MCF 10A (cell line): ENCODE measurements at regions of chr21 and their contacts with region 1.

Region 1: GRCh38 chr21:17688912-17689874 is 76.5 kb upstream of the BTG3 start:
- DNase-seq: peak; percentile 95
- H3K4me3 Mint-ChIP-seq: peak overlapping the region; percentile 64
- H3K27ac Mint-ChIP-seq: peak overlapping the region; percentile 97
- H3K4me1 Mint-ChIP-seq: peaks cover 30% of the 10 kb centered on the region
- H3K27me3 Mint-ChIP-seq: no peaks in the 10 kb centered on the region
- CTCF ChIP-seq: peak; percentile 33

Region 2: DNA sequence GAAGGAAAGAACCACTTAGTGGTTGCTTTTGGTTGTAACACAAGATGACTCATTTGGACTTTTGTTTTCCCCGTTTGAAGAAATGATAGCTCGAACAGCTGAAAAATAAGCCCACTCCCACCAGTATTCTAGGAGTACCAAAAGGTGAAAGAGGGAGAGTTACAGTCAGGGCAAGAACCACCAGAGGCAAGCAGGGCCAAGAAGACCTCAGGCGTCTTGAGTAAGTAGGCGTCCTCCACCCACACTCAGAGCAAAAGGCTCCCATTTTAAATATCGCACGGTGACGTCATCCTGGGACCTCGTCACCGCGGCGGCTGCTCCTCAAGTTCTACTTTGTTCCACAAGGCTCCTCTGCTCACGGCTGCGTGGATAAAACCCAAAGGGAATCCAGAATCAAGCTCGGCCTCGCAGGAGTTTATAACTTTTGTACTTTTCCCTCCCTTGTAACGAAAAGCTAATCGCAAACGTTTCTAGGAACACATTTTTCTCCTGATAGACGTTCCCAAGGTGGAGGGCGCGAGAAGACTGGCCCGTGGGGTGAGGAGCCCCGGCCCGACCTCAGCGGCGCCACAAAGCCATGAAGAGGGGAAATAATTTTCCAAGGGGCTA is 77.7 kb before region 1 on chr21:
- CTCF ChIA-PET with region 1: interaction called, 4 read pairs
- POLR2A ChIA-PET with region 1: interaction called, 10 read pairs
- intact Hi-C with region 1: no loop called
- DNase-seq: peak; percentile 87
- H3K4me3 Mint-ChIP-seq: peak overlapping the region; percentile 89
- H3K27ac Mint-ChIP-seq: peak overlapping the region; percentile 93
- H3K4me1 Mint-ChIP-seq: peaks cover 10% of the 10 kb centered on the region
- H3K27me3 Mint-ChIP-seq: no peaks in the 10 kb centered on the region
- CTCF ChIP-seq: no peak

Region 3: DNA sequence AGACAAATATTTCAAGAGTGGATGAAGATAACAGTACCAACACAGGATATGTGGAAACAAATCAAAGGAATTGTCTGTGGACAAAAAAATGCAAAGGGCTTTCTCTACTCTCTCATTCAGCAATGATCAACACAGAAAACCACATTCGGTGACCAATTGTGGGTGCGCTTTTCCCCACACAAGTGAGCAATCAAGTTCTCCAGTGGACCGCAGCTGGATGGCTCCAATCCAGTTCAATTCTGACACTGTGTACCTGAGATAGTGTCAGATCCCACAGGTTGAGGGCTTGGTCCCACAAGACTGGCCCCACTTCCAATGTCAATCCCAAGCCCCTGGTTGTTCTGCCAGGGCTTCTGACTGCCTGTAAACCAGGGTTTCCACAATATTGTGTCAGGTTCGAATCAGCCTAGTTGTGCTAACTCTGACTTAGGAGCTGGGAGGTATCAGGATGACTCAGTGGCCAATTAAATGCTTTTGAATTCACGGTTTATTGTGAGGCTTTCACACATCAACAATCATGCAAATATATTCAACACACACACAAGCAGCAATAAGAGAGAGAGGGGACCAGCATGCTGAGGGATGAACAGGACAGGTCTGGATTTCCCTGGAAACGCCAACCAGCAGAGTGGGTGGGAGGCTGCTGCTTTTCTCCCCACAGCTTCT is 10.5 kb after region 1 on chr21:
- CTCF ChIA-PET with region 1: interaction called, 5 read pairs
- POLR2A ChIA-PET with region 1: interaction called, 10 read pairs
- intact Hi-C with region 1: no loop called
- DNase-seq: no peak
- H3K4me3 Mint-ChIP-seq: no peak overlapping the region
- H3K27ac Mint-ChIP-seq: no peak overlapping the region
- H3K4me1 Mint-ChIP-seq: no peaks in the 10 kb centered on the region
- H3K27me3 Mint-ChIP-seq: no peaks in the 10 kb centered on the region
- CTCF ChIP-seq: no peak

Region 4: DNA sequence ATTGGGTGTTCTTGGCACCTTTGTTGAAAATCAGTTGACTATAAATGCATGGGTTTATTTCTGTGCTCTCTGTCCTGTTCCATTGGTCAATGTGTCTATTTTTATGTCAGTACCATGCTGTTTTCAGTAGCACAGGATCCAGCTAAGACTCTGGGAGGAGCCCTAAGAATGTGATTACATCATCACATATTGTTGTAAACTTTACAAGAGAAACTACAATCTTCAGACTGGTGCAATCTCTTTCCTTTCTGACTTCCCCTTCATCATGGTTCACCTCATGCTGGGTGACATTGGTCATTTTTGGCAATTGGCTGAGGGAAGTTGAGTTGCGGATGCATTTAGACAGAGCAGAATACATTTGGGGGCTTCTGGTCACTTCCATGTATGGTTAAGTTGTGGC is 41.6 kb after region 1 on chr21:
- CTCF ChIA-PET with region 1: interaction called, 3 read pairs
- POLR2A ChIA-PET with region 1: interaction called, 26 read pairs
- intact Hi-C with region 1: no loop called
- DNase-seq: peak; percentile 22
- H3K4me3 Mint-ChIP-seq: no peak overlapping the region
- H3K27ac Mint-ChIP-seq: no peak overlapping the region
- H3K4me1 Mint-ChIP-seq: peaks cover 15% of the 10 kb centered on the region
- H3K27me3 Mint-ChIP-seq: no peaks in the 10 kb centered on the region
- CTCF ChIP-seq: no peak

Region 5: DNA sequence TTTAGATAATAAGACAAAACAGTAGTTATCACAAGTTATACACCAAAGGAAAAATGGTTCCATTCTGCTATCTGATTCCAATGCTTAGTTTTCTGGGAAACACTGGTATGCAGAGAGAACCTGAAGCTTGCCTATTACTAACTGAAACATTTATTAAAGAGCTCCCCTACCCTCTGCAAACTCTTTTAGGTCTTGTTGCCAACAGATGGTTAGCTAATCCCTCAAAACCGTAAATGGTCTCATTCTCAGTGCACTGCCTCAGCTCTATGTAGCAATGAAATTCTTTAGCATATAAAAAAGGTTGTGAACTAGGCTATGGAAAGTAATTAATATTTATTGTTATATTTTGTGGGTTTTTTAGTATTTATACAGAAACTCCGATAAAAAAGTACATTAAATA is 109.6 kb after region 1 on chr21:
- CTCF ChIA-PET with region 1: interaction called, 5 read pairs
- POLR2A ChIA-PET with region 1: interaction called, 10 read pairs
- intact Hi-C with region 1: no loop called
- DNase-seq: no peak
- H3K4me3 Mint-ChIP-seq: no peak overlapping the region
- H3K27ac Mint-ChIP-seq: no peak overlapping the region
- H3K4me1 Mint-ChIP-seq: peaks cover 15% of the 10 kb centered on the region
- H3K27me3 Mint-ChIP-seq: no peaks in the 10 kb centered on the region
- CTCF ChIP-seq: no peak

Region 6: GRCh38 chr21:17903029-17903806 is 214.0 kb after region 1 on chr21:
- CTCF ChIA-PET with region 1: interaction called, 12 read pairs
- POLR2A ChIA-PET with region 1: no interaction called
- intact Hi-C with region 1: no loop called
- DNase-seq: peak; percentile 45
- H3K4me3 Mint-ChIP-seq: no peak overlapping the region
- H3K27ac Mint-ChIP-seq: no peak overlapping the region
- H3K4me1 Mint-ChIP-seq: peaks cover 12% of the 10 kb centered on the region
- H3K27me3 Mint-ChIP-seq: no peaks in the 10 kb centered on the region
- CTCF ChIP-seq: peak; percentile 9

Region 7: DNA sequence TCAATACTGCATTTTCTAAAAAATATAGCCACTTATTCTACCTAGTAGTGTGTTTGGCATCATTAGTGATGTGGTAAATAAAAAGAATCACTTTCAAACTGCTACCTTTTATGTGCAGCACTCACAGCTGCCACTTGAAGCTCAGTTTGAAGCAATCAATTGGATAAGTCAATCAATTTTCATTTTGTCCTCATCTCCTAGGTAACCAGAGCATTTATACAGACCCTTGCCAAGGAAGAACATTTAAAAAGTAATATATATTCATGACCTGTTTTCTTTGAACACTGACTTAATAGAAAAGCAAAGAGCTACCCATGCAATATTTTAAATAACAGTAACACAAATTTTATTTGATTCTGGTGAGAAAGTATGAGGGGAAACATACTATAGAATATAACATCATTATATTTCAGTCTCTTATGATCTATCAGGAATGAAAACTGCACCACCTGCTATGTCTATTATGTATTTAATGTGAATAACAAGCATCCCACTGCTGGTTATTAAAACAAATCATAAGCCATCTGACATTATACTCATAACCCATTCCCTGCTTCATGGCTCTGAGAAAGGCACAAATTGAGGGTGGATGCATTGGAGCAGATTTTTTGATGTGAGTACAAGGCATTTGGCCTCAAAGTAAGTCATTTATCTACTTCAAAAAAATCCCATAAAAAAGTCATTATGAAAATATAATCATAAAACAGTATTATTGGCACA is 298.3 kb after region 1 on chr21:
- CTCF ChIA-PET with region 1: no interaction called
- POLR2A ChIA-PET with region 1: no interaction called
- intact Hi-C with region 1: no loop called
- DNase-seq: no peak
- H3K4me3 Mint-ChIP-seq: no peak overlapping the region
- H3K27ac Mint-ChIP-seq: no peak overlapping the region
- H3K4me1 Mint-ChIP-seq: no peaks in the 10 kb centered on the region
- H3K27me3 Mint-ChIP-seq: no peaks in the 10 kb centered on the region
- CTCF ChIP-seq: no peak